Activated T-helper 1 cell treated with anti-CD3 and anti-CD28 coated beads, Interleukin-12 subunit alpha, Interleukin-12 subunit beta, Interleukin-2, Interleukin-4 antibody, amounts not matched to agents 30 ng/mL and 10 ng/mL and 1 ng/mL, durations not matched to agents 14 hours and 24 hours and 36 hours (primary cell): ENCODE measurements at regions of chr3 and their contacts with region 1.

Region 1: DNA sequence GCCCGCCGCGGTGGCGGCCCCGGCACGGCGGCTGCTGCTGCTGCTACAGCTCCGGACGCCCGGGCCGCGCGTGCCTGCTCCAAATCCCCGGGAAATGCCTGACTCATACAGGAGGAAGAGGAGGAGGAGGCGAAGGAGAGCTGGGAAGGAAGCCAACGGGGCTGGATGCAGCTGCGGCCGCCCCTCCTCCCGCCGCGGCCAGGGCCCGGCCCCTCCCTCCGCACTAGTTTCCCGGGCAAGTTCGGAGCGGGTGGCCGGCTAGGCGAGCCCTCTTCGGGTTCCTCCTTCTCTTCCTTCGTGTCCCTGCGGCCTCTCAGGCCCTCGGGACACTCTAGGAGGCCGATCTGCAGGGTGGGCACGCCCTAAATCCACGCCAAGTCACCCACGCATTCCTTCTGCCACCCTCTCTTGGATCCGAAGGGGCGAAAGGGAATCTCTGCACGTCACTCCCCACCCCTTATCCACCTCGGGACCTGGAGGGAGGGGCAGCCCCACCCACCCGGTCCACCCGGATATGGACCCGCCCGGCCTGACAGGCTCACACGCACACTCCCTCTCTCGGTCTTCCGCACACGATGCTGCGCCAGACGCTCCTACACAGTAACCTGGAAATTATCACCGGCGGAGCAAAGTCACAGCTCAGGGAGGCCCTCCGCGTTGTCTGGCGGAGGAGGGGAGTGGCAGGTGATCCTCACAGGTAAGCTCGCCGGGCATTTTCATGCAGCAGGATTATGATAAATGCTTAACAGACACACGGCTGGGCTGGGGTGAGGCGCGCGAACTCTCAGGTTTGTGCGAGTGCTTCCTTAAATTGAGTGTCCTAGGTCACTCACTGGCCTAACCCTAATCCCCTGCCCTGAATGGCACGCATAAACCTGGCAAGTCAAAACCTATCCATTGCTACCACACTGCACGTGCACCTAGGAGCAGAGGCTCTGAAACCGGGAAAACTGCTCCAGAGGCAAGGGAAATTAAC is at the starts of genes OSBPL10 and ZNF860:
- DNase-seq: peak; percentile 4
- H3K4me3 Mint-ChIP-seq: peak within 1 kb of the TSS; percentile 87
- H3K27ac Mint-ChIP-seq: peak within 1 kb of the TSS; percentile 62
- H3K4me1 Mint-ChIP-seq: peaks cover 27% of the 10 kb centered on the region
- H3K27me3 Mint-ChIP-seq: peaks cover 17% of the 10 kb centered on the region
- total RNA-seq, gene OSBPL10: 12.1 and 14.5 TPM in 2 replicates
- total RNA-seq, gene ZNF860: 0.34 and 0.81 TPM in 2 replicates

Region 2: DNA sequence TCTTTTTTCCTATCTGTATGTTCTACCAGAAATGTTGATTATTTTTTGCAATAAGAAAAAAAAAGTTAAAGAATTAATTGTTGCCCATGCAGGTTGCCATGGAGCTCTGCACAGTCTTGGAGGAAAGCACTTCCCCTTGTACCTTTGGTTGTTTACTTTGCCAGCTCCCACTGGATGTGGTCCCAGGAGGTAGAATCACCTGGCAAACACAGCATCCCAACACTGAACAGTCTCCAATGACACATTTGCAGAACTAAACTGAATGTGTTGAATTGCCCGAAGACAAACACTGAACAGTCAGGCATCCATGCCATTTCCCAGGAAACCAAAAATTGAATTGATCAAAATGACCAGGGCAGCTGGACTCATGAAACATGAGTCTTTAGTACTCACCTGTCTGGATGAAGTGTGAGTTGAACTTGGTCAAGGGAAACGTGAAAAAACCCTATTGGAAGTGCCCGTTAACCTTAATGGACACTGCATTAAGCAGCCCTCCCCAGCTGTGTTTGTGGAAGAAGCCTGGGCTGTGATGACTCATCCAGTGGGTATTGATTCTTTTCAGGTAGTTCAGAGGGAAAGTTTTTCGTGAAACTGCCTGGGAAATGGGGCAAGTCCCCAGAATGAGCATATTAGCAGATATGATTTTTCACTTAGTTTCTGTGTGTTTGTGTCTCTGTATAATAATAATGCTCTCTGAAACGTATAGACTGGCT is 733.5 kb before region 1 on chr3:
- intact Hi-C with region 1: loop called (anchors 1 kb)
- DNase-seq: no peak
- H3K4me3 Mint-ChIP-seq: no peak overlapping the region
- H3K27ac Mint-ChIP-seq: peak overlapping the region; percentile 75
- H3K4me1 Mint-ChIP-seq: peaks cover 51% of the 10 kb centered on the region
- H3K27me3 Mint-ChIP-seq: no peaks in the 10 kb centered on the region

Region 3: GRCh38 chr3:31634481-31634880 is 347.0 kb before region 1 on chr3:
- intact Hi-C with region 1: loop called (anchors 5 kb)
- DNase-seq: no peak
- H3K4me3 Mint-ChIP-seq: no peak overlapping the region
- H3K27ac Mint-ChIP-seq: no peak overlapping the region
- H3K4me1 Mint-ChIP-seq: peaks cover 43% of the 10 kb centered on the region
- H3K27me3 Mint-ChIP-seq: no peaks in the 10 kb centered on the region

Region 4: GRCh38 chr3:31768479-31769123 is 212.9 kb before region 1 on chr3:
- intact Hi-C with region 1: loop called (anchors 1 kb)
- DNase-seq: peak; percentile 42
- H3K4me3 Mint-ChIP-seq: peak overlapping the region; percentile 41
- H3K27ac Mint-ChIP-seq: peak overlapping the region; percentile 52
- H3K4me1 Mint-ChIP-seq: peaks cover 82% of the 10 kb centered on the region
- H3K27me3 Mint-ChIP-seq: no peaks in the 10 kb centered on the region

Region 5: DNA sequence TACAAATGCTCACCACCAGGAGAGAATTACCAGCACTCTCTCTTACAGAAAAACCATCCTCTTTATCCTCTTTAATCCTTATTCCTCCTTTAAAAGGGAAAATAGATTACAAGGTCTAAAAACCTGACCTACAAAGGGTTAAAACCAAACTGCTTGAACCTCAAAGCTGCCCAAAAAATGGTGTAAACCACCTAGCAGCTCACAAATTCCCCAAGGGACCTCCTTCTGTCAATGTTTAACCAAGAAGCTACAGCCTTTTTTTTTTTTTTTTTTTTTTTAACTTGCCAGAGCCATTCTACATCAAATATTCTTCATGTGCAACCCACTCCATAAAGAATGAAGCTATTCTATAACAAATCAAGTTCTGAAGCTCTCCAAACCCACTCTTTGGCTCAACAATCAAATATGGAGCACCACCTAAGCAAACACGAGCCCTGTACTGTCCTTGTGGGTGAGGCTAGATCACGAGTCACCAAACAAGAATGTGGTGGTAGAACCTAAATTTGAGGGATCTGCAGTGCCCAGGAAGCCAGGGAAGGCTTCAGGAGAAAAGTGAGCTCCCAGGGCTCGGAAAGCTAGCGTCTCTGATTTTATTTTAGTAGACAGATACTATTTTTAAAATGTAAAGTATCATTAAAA is 20.6 kb before region 1 on chr3:
- intact Hi-C with region 1: loop called (anchors 1 kb)
- DNase-seq: no peak
- H3K4me3 Mint-ChIP-seq: no peak overlapping the region
- H3K27ac Mint-ChIP-seq: no peak overlapping the region
- H3K4me1 Mint-ChIP-seq: peaks cover 25% of the 10 kb centered on the region
- H3K27me3 Mint-ChIP-seq: no peaks in the 10 kb centered on the region

Region 6: DNA sequence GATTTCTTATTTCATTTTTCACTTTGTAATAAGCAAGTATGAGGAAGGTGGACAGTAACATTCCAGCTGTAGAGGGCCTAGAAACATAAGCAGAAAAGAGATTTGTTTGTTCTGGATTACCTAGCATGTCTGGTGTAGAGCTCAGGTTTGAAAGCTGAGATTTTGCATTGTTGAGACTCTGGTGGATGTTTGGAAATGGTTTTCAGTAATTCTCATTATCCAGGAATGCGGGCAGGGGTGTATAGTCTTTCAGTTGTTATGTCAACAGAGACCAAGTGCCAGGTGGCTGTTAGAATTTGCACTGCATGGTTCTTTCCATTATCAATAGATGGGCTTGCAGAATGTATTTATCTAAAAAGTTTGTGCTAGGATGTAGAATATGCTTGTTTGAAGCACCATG is 135.8 kb after region 1 on chr3:
- intact Hi-C with region 1: loop called (anchors 2 kb)
- DNase-seq: no peak
- H3K4me3 Mint-ChIP-seq: no peak overlapping the region
- H3K27ac Mint-ChIP-seq: no peak overlapping the region
- H3K4me1 Mint-ChIP-seq: peaks cover 34% of the 10 kb centered on the region
- H3K27me3 Mint-ChIP-seq: no peaks in the 10 kb centered on the region

Region 7: GRCh38 chr3:32641356-32641755 is 659.9 kb after region 1 on chr3:
- intact Hi-C with region 1: no loop called
- DNase-seq: no peak
- H3K4me3 Mint-ChIP-seq: no peak overlapping the region
- H3K27ac Mint-ChIP-seq: no peak overlapping the region
- H3K4me1 Mint-ChIP-seq: no peaks in the 10 kb centered on the region
- H3K27me3 Mint-ChIP-seq: peaks cover 13% of the 10 kb centered on the region

Region 8: GRCh38 chr3:33105341-33105948 is 1124.0 kb after region 1 on chr3:
- intact Hi-C with region 1: no loop called
- DNase-seq: no peak
- H3K4me3 Mint-ChIP-seq: no peak overlapping the region
- H3K27ac Mint-ChIP-seq: no peak overlapping the region
- H3K4me1 Mint-ChIP-seq: no peaks in the 10 kb centered on the region
- H3K27me3 Mint-ChIP-seq: peaks cover 3% of the 10 kb centered on the region